Right cardiac atrium (tissue), 5 donors: ENCODE measurements at regions of chr19 and their contacts with region 1.

Region 1: DNA sequence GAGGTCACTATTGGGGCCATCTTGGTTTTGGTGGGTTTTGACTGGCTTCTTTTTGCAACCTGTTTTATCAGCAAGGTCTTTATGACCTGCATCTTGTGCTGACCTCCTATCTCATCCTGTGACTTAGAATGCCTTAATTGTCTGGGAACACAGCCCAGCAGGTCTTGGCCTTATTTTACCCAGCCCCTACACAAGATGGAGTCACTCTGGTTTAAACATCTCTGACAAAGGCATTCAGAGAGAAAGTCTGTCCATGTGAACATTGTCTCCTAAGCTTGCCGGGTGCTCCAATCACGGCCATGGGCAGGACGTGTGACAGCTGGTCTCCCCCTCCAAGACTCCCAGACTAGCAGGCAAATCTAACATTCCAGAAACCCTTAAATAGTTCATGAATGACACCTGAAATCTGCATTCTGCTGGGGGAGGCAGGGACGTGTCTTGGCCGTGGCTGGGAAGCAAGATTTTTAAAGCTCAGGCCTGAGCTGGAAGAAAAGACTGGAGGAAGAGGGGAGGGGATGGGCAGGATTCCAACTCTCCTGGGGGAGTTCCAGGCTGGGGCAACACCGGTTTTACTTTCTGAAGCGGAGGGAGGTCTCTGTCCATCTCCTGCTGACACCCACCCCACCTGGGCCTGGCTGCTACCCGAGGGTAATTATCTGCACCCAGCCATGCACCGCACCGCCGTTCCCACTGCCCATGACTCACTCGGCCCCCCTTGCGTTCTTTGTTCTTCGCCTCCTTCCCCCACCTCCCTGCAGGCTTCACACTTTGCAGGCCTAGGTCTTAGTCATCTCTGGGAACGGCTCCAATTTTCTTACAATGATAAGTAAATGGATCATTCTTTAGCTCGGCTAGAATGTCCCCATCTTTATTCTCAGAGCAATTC is 11.6 kb upstream of the OR1M1 start:
- DNase-seq: peak; percentile 77 to 83 (median 82)
- ATAC-seq: peak; percentile 92 to 99
- H3K4me3 ChIP-seq: no peak overlapping the region
- H3K27ac ChIP-seq: no peak overlapping the region
- H3K4me1 ChIP-seq: peaks cover 6% of the 10 kb centered on the region
- H3K27me3 ChIP-seq: no peaks in the 10 kb centered on the region

Region 2: DNA sequence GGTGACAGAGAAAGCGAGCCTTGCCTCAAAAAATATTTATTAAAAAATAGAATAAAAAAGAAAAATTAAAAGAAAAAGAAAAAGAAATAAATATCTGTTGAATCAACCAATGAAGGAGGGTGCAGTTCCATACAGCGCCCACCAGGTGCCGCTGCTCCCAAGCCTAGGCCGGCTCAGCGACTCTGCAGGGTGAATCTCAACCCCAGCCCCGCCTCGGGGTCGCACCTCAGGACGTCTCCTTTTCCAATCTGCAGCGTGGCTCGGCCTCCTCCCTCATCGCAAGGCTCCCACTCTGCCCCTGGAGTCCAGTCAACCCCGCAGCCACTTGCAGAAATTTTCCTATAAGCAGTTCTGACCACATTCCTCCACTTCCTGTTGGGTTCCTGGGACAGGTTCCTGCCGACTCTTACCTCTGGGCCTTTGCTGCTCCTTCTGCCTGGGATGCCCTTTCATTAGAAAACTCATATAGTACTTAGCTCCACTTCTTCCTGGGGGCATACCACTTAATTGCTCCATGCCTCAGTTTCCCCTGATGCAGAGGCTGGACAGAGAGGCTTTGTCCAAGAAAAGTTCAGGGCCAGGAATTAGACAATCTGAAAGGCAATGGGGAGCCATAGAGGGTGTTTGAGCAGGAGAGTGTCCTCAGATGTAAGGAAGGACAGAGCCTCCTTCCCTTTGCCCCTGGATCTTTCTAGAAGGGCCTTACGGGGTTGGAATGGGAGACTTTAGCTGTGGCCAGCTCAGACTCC is 420.5 kb before region 1 on chr19:
- intact Hi-C with region 1: loop called (anchors 2 to 10 kb)
- DNase-seq: peak; percentile 42 to 79 (median 77)
- ATAC-seq: peak in 1 of 2 donors; percentile 68
- H3K4me3 ChIP-seq: no peak overlapping the region
- H3K27ac ChIP-seq: no peak overlapping the region
- H3K4me1 ChIP-seq: no peaks in the 10 kb centered on the region
- H3K27me3 ChIP-seq: no peaks in the 10 kb centered on the region